WTC11 (cell line): ENCODE measurements at regions of chr12 and their contacts with region 1.

Region 1: GRCh38 chr12:66708704-66709456 is 30.0 kb upstream of the GRIP1 start:
- DNase-seq: no peak
- ATAC-seq: no peak
- H3K4me3 Mint-ChIP-seq: no peak overlapping the region
- H3K27ac Mint-ChIP-seq: peak overlapping the region; percentile 1; the same call in 1 of the 2 replicates
- H3K4me1 Mint-ChIP-seq: no peaks in the 10 kb centered on the region
- H3K27me3 Mint-ChIP-seq: no peaks in the 10 kb centered on the region
- CTCF ChIP-seq: no peak

Region 2: DNA sequence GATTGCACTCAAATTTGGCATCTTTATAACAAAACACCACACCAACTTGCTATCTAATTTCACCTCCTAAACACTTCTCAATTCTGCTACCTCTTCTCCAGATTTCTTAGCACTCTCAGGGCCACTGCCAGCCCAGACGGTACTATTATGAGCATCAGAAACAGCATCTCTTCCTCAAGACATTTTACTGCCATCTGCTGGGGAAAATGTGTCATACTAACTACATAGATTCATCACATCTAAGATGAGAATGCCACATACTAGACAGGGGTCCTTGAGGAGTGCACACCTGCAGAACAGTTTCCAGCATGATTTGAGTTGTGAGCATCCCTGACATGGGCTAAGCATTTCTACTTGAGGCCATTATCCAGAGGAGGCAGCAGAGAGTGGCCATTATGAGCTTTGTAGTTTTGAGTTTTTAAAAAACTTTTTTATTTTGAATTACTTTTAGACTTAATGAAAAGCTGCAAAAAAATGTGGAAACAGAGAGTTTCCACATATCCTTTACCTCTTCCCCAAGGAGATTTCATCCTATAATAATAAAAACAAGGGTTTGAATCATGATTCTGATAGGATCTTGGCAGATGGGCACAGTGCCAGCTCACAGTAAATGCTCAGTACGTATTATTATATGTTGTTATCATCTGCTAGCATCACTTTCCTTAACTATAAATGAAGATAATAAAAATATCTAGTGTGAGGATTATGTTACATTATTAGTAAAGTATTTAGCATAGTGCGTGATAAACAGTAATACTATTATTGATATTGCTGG is 14.8 kb before region 1 on chr12:
- CTCF ChIA-PET with region 1: interaction called, 14 read pairs
- POLR2A ChIA-PET with region 1: no interaction called
- DNase-seq: no peak
- ATAC-seq: peak; percentile 81
- H3K4me3 Mint-ChIP-seq: no peak overlapping the region
- H3K27ac Mint-ChIP-seq: no peak overlapping the region
- H3K4me1 Mint-ChIP-seq: peaks cover 26% of the 10 kb centered on the region
- H3K27me3 Mint-ChIP-seq: no peaks in the 10 kb centered on the region
- CTCF ChIP-seq: peak; percentile 29; the same call in 1 of the 2 replicates